Pancreas (tissue), 10 donors: ENCODE measurements at regions of chr2 and their contacts with region 1.

Region 1: GRCh38 chr2:171602352-171602751 is 80.1 kb downstream of the CYBRD1 start:
- DNase-seq: no peak
- ATAC-seq: no peak
- H3K4me3 ChIP-seq: no peak overlapping the region
- H3K27ac ChIP-seq: no peak overlapping the region
- H3K4me1 ChIP-seq: no peaks in the 10 kb centered on the region
- H3K27me3 ChIP-seq: no peaks in the 10 kb centered on the region
- CTCF ChIP-seq: no peak

Region 2: GRCh38 chr2:171798252-171798741 is 195.9 kb after region 1 on chr2:
- intact Hi-C with region 1: loop called in 1 of 3 experiments (anchors 10 kb)
- DNase-seq: no peak
- ATAC-seq: no peak
- H3K4me3 ChIP-seq: no peak overlapping the region
- H3K27ac ChIP-seq: no peak overlapping the region
- H3K4me1 ChIP-seq: no peaks in the 10 kb centered on the region
- H3K27me3 ChIP-seq: no peaks in the 10 kb centered on the region
- CTCF ChIP-seq: no peak